ENCODE measurements at regions of chr6 and their contacts with region 1.

Region 1: DNA sequence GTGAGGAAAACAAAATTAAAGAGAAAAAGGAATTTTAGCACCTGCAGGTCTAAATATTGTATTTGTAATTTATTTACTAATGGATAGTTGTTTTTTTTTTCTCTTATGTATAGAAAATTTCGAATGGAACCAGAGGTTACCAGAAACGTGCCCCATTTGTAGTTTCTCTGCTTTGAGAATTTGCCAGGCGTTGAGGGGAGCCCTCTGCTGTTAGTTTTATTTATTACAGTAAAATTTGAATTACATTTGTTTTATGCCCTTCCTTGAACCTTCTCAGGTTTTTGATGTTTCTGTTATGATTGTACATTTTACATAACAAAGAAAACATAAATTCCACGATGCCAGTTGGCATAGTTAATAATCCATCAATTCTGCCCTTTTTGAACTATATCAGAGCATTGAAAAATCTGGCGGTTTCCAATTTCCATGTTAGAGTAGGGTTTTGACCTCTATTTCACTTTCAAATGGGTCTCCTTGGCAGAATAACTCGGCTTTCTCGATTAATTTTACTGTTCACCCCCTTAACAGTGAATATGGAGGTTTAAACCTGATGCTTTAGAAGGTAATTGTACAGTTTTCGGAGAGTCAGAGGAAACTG is 35.1 kb upstream of the RFPL4B start:
- DNase-seq: no peak
- ATAC-seq: peak; percentile 38
- H3K4me3 ChIP-seq: no peak overlapping the region
- H3K27ac ChIP-seq: no peak overlapping the region
- H3K4me1 ChIP-seq: peaks cover 6% of the 10 kb centered on the region
- H3K27me3 ChIP-seq: no peaks in the 10 kb centered on the region
- CTCF ChIP-seq: peak; percentile 69

Region 2: GRCh38 chr6:112180095-112180820 is 131.8 kb before region 1 on chr6:
- intact Hi-C with region 1: loop called (anchors 5 kb)
- DNase-seq: no peak
- ATAC-seq: peak; percentile 80
- H3K4me3 ChIP-seq: no peak overlapping the region
- H3K27ac ChIP-seq: no peak overlapping the region
- H3K4me1 ChIP-seq: no peaks in the 10 kb centered on the region
- H3K27me3 ChIP-seq: no peaks in the 10 kb centered on the region
- CTCF ChIP-seq: peak; percentile 79

Measured in upper lobe of right lung (tissue), 1 donor.